ENCODE measurements at regions of chr2 and their contacts with region 1.

Region 1: GRCh38 chr2:20953145-20953824 is 90.6 kb downstream of the APOB start:
- DNase-seq: no peak
- H3K4me3 ChIP-seq: no peak overlapping the region
- H3K4me3 Mint-ChIP-seq: no peak overlapping the region
- H3K27ac ChIP-seq: no peak overlapping the region
- H3K27ac Mint-ChIP-seq: no peak overlapping the region
- H3K4me1 ChIP-seq: no peaks in the 10 kb centered on the region
- H3K4me1 Mint-ChIP-seq: no peaks in the 10 kb centered on the region
- H3K27me3 ChIP-seq: no peaks in the 10 kb centered on the region
- H3K27me3 Mint-ChIP-seq: peaks cover 2 to 4% (median 3%) of the 10 kb centered on the region in 3 donors
- CTCF ChIP-seq: no peak

Region 2: GRCh38 chr2:20525041-20526035 is 427.9 kb before region 1 on chr2:
- intact Hi-C with region 1: no loop called
- DNase-seq: no peak
- H3K4me3 ChIP-seq: no peak overlapping the region
- H3K4me3 Mint-ChIP-seq: no peak overlapping the region
- H3K27ac ChIP-seq: no peak overlapping the region
- H3K27ac Mint-ChIP-seq: no peak overlapping the region
- H3K4me1 ChIP-seq: no peaks in the 10 kb centered on the region
- H3K4me1 Mint-ChIP-seq: no peaks in the 10 kb centered on the region
- H3K27me3 ChIP-seq: no peaks in the 10 kb centered on the region
- H3K27me3 Mint-ChIP-seq: peaks cover 2 to 19% (median 5%) of the 10 kb centered on the region in 3 donors
- CTCF ChIP-seq: no peak

Region 3: DNA sequence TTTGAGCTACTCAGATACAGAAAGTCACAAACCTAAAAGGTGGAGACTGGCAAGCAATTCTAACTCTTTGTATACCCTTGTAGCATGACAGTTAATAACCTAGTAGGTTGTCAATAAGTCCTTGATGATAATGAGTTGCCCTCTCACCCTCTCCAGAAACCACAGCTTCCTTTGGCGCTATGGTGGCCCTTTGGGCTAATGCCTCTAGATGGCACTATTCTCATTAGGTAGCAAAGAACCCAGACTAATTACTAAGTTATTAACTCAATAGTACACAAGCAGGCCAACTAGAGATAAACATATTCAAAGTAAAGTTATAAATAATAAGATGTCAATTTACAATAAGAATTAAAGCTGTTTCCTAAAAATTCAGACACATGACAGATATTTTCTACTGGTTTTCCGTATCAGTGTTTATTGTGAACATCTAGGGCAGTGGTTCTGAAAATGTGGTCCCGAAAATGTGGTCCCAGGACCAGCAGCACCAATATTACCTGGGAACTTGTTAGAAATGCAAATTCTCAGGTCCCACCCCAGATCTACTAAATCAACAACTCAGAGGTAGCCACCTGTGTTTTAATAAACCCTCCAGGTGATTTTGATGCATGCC is 171.5 kb before region 1 on chr2:
- intact Hi-C with region 1: loop called in 1 of 2 experiments (anchors 10 kb)
- DNase-seq: peak in 2 of 3 donors; percentile 1 to 5
- H3K4me3 ChIP-seq: no peak overlapping the region
- H3K4me3 Mint-ChIP-seq: no peak overlapping the region
- H3K27ac ChIP-seq: no peak overlapping the region
- H3K27ac Mint-ChIP-seq: no peak overlapping the region
- H3K4me1 ChIP-seq: no peaks in the 10 kb centered on the region
- H3K4me1 Mint-ChIP-seq: no peaks in the 10 kb centered on the region
- H3K27me3 ChIP-seq: no peaks in the 10 kb centered on the region
- H3K27me3 Mint-ChIP-seq: no peaks in the 10 kb centered on the region
- CTCF ChIP-seq: peak; percentile 61

Measured in CD14-positive monocyte (primary cell).